ENCODE measurements at regions of chr1 and their contacts with region 1.

Region 1: GRCh38 chr1:98468111-98468717 is 193.3 kb upstream of the SNX7 start:
- DNase-seq: peak; percentile 42
- H3K4me3 ChIP-seq: no peak overlapping the region
- H3K27ac ChIP-seq: no peak overlapping the region
- H3K4me1 ChIP-seq: peaks cover 16% of the 10 kb centered on the region
- H3K27me3 ChIP-seq: no peaks in the 10 kb centered on the region
- CTCF ChIP-seq: peak; percentile 89 to 90

Region 2: GRCh38 chr1:96966536-96967138 is 1501.6 kb before region 1 on chr1:
- CTCF ChIA-PET with region 1: no interaction called
- dilution Hi-C with region 1: no loop called
- in situ Hi-C with region 1: no loop called
- intact Hi-C with region 1: loop called (anchors 2 kb)
- DNase-seq: peak; percentile 60
- H3K4me3 ChIP-seq: peak overlapping the region; percentile 32 to 45 (median 42)
- H3K27ac ChIP-seq: no peak overlapping the region
- H3K4me1 ChIP-seq: no peaks in the 10 kb centered on the region
- H3K27me3 ChIP-seq: peaks cover 3% of the 10 kb centered on the region
- CTCF ChIP-seq: peak; percentile 95 to 97

Region 3: DNA sequence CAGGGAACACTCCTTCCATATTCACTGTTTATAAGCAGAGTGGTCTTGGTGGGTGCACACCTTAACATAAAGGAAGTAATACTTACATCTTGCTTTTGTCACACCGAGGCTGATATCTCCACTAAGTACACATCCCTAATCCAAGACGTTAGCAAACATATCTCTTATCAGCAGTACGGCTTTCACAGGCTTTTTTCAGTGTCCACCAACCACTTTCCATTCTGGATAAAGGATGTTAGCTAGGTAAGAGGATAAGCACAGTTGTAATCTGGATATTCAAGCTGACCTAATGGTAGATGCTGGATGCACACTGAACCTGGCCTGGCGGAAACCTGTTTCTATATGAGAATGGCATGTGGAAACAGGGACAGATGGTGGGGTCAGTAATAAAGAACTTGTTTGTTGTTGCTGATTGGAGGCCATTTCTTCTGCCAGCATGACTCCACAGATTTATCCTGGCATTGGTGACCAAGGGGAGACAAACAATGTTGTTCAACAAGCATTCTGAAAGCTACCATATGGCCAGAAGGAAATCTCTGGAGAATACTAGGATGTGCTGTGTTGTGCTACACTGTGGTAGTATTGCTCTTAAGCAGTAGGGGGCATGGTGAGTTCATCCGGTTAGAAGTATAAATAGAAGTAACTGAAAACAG is 1330.2 kb before region 1 on chr1:
- CTCF ChIA-PET with region 1: no interaction called
- dilution Hi-C with region 1: no loop called
- in situ Hi-C with region 1: no loop called
- intact Hi-C with region 1: loop called (anchors 5 kb)
- DNase-seq: peak; percentile 42
- H3K4me3 ChIP-seq: no peak overlapping the region
- H3K27ac ChIP-seq: no peak overlapping the region
- H3K4me1 ChIP-seq: no peaks in the 10 kb centered on the region
- H3K27me3 ChIP-seq: no peaks in the 10 kb centered on the region
- CTCF ChIP-seq: peak; percentile 80 to 81

Region 4: DNA sequence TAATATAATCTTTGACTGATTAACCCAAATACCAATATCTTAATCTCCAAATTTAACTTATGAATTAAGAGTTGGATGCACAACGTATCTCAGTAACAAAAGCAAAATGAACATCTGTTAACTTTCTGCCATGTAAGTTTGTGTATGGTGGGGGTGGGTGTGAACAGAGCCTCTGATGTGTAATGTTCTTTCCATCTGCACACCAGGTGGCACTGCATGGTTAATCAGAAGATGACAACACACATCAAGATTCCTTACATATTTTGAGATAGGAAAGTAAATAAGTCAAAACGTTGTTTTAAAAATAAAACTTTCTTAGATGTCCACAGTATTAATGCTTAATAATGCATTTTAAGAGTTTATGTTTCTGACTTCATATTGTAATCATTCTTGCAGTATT is 799.3 kb before region 1 on chr1:
- CTCF ChIA-PET with region 1: no interaction called
- dilution Hi-C with region 1: no loop called
- in situ Hi-C with region 1: loop called in 1 of 2 experiments (anchors 25 kb)
- intact Hi-C with region 1: loop called (anchors 1 kb)
- DNase-seq: peak; percentile 28
- H3K4me3 ChIP-seq: no peak overlapping the region
- H3K27ac ChIP-seq: no peak overlapping the region
- H3K4me1 ChIP-seq: no peaks in the 10 kb centered on the region
- H3K27me3 ChIP-seq: no peaks in the 10 kb centered on the region
- CTCF ChIP-seq: peak in 1 of 2 donors; percentile 45

Region 5: GRCh38 chr1:97920832-97921571 is 547.2 kb before region 1 on chr1 and contains the start of gene DPYD:
- CTCF ChIA-PET with region 1: interaction called, 3 read pairs
- dilution Hi-C with region 1: no loop called
- in situ Hi-C with region 1: no loop called
- intact Hi-C with region 1: loop called (anchors 2 kb)
- DNase-seq: peak; percentile 81
- H3K4me3 ChIP-seq: peak within 1 kb of the TSS; percentile 73 to 100 (median 99)
- H3K27ac ChIP-seq: peak within 1 kb of the TSS; percentile 72
- H3K4me1 ChIP-seq: peaks cover 17% of the 10 kb centered on the region
- H3K27me3 ChIP-seq: no peaks in the 10 kb centered on the region
- CTCF ChIP-seq: no peak
- total RNA-seq, gene DPYD: 16.8 to 24.3 TPM

Region 6: GRCh38 chr1:98323906-98324358 is 144.3 kb before region 1 on chr1:
- CTCF ChIA-PET with region 1: no interaction called
- dilution Hi-C with region 1: no loop called
- in situ Hi-C with region 1: no loop called
- intact Hi-C with region 1: loop called (anchors 2 kb)
- DNase-seq: peak; percentile 89
- H3K4me3 ChIP-seq: no peak overlapping the region
- H3K27ac ChIP-seq: peak overlapping the region; percentile 97
- H3K4me1 ChIP-seq: peaks cover 53% of the 10 kb centered on the region
- H3K27me3 ChIP-seq: no peaks in the 10 kb centered on the region
- CTCF ChIP-seq: no peak

Region 7: GRCh38 chr1:98502937-98503336 is 34.7 kb after region 1 on chr1:
- CTCF ChIA-PET with region 1: no interaction called
- dilution Hi-C with region 1: no loop called
- in situ Hi-C with region 1: no loop called
- intact Hi-C with region 1: no loop called
- DNase-seq: no peak
- H3K4me3 ChIP-seq: no peak overlapping the region
- H3K27ac ChIP-seq: no peak overlapping the region
- H3K4me1 ChIP-seq: no peaks in the 10 kb centered on the region
- H3K27me3 ChIP-seq: no peaks in the 10 kb centered on the region
- CTCF ChIP-seq: no peak